Vagina (tissue), 2 donors: ENCODE measurements at regions of chr17 and their contacts with region 1.

Region 1: GRCh38 chr17:7296189-7296902 is 1.9 kb upstream of the YBX2 start:
- DNase-seq: no peak
- H3K4me3 ChIP-seq: peak overlapping the region in 1 of 2 donors; percentile 15
- H3K27ac ChIP-seq: peak overlapping the region; percentile 33
- H3K4me1 ChIP-seq: peaks cover 45% of the 10 kb centered on the region
- H3K27me3 ChIP-seq: no peaks in the 10 kb centered on the region
- CTCF ChIP-seq: peak; percentile 85 to 92 (median 88)
- POLR2A ChIP-seq: no peak

Region 2: GRCh38 chr17:7280519-7281429 is 15.6 kb before region 1 on chr17:
- intact Hi-C with region 1: loop called (anchors 2 kb)
- DNase-seq: no peak
- H3K4me3 ChIP-seq: peak overlapping the region; percentile 43
- H3K27ac ChIP-seq: peak overlapping the region; percentile 77
- H3K4me1 ChIP-seq: peaks cover 24% of the 10 kb centered on the region
- H3K27me3 ChIP-seq: no peaks in the 10 kb centered on the region
- CTCF ChIP-seq: peak; percentile 83 to 92 (median 90)
- POLR2A ChIP-seq: no peak